T-cell (primary cell): ENCODE measurements at regions of chr9 and their contacts with region 1.

Region 1: DNA sequence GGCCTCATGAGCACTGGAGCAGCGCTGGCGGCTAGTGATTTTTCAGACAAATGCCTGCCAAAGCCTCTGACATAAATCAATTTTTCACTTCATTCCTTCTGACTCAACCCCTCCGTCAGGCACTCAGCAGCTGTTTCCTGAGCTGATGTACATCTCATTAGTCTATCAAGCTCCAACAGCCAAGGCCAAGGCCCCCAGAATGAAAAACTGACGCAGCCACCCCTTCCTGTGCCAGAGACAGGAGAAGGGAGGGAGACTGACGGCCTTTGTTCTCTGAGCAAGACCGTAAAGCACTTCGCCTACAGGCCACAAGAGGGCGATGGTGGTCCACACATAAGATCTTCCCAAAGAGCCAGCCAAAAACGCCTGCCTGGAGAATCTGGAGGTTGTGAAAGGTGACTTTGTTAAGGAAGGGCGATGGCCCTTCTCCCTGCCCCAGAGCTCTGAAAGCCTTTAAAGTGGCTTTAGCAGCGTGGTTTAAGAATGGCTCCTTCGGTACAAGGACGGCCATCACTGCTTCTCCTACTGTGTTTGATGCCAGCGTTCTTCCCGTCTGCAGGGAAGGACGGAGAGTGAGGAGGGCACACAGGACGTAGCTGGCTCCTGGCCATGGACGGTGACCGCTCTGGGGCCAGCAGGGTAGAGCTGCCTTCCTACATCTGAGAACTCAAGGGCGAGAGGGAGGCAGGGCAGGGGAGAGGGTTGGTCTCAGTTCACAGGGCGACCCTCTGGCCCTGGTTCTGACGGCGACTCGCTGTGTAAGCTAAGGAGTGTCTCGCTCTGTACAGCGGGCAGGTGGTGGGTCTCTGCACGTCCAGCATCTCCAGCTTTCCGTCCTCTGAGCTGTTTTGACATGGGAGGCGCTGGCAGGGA is 37.0 kb downstream of the ALG2 start:
- DNase-seq: peak; percentile 53 to 89 (median 69)
- ATAC-seq: peak; percentile 85 to 89 (median 86)
- H3K4me3 ChIP-seq: peak overlapping the region in 1 of 2 donors; percentile 1
- H3K4me3 Mint-ChIP-seq: peak overlapping the region; percentile 17 to 54 (median 49)
- H3K27ac ChIP-seq: no peak overlapping the region
- H3K27ac Mint-ChIP-seq: peak overlapping the region in 1 of 2 donors; percentile 50
- H3K4me1 ChIP-seq: peaks cover 0 to 14% of the 10 kb centered on the region in 2 experiments
- H3K4me1 Mint-ChIP-seq: peaks cover 14 to 29% (median 19%) of the 10 kb centered on the region in 3 donors
- H3K27me3 ChIP-seq: peaks cover 0 to 5% of the 10 kb centered on the region in 2 experiments
- H3K27me3 Mint-ChIP-seq: peaks cover 6% of the 10 kb centered on the region in 2 donors

Region 2: DNA sequence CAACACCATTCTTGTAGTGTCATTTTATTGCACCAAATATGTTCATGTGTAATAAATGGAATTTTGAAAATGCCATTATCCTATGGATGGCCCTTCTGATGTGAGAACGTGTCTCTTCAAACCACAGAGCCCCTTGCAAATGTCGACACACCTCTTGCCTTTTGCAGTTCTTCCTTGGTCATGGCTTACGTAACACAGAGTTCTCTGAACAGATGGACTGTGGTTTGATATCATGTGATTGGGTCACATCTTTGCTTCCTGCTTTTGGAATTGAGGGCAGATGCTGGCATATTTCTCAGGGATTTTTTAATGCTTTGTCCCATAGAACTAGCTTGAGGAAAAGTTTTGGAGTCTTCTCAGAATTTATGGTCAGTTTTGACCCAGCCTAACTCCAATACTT is 75.2 kb before region 1 on chr9:
- CTCF ChIA-PET with region 1: no interaction called
- POLR2A ChIA-PET with region 1: no interaction called
- DNase-seq: peak in 1 of 35 experiments; percentile 30
- ATAC-seq: no peak
- H3K4me3 ChIP-seq: no peak overlapping the region
- H3K4me3 Mint-ChIP-seq: peak overlapping the region in 1 of 3 donors; percentile 60
- H3K27ac ChIP-seq: peak overlapping the region; percentile 7
- H3K27ac Mint-ChIP-seq: peak overlapping the region; percentile 24 to 84
- H3K4me1 ChIP-seq: peaks cover 42 to 80% of the 10 kb centered on the region in 2 experiments
- H3K4me1 Mint-ChIP-seq: peaks cover 84 to 86% (median 85%) of the 10 kb centered on the region in 3 donors
- H3K27me3 ChIP-seq: no peaks in the 10 kb centered on the region
- H3K27me3 Mint-ChIP-seq: no peaks in the 10 kb centered on the region

Region 3: DNA sequence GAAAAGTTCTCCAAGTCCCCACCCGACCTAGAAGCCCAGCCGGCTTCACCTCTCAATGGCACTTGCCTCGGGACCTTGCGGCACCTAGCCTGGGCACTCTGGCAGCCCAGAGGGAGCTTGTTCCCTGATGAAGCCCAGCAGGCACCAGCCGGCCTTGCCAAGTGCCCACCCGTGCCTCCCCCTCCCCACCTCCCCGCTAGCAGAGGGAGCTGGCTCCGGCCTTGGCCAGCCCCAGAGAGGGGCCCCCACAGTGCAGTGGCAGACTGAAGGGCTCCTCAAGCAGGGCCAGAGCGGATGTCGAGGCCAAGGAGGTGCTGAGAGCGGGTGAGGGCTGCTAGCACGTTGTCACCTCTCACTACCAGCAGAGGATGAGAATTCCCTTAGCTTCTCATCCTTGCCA is 1355.6 kb after region 1 on chr9:
- CTCF ChIA-PET with region 1: interaction called in 1 of 2 experiments, 10 read pairs
- POLR2A ChIA-PET with region 1: no interaction called
- DNase-seq: no peak
- ATAC-seq: no peak
- H3K4me3 ChIP-seq: no peak overlapping the region
- H3K4me3 Mint-ChIP-seq: no peak overlapping the region
- H3K27ac ChIP-seq: no peak overlapping the region
- H3K27ac Mint-ChIP-seq: no peak overlapping the region
- H3K4me1 ChIP-seq: no peaks in the 10 kb centered on the region
- H3K4me1 Mint-ChIP-seq: no peaks in the 10 kb centered on the region
- H3K27me3 ChIP-seq: no peaks in the 10 kb centered on the region
- H3K27me3 Mint-ChIP-seq: no peaks in the 10 kb centered on the region